PC-3 (cell line): ENCODE measurements at regions of chr12 and their contacts with region 1.

Region 1: GRCh38 chr12:121060149-121061001 is 21.3 kb upstream of the OASL start:
- DNase-seq: peak; percentile 75
- ATAC-seq: peak; percentile 71
- H3K4me3 ChIP-seq: peak overlapping the region; percentile 35; the same call in 1 of the 2 replicates
- H3K27ac ChIP-seq: no peak overlapping the region
- H3K4me1 ChIP-seq: no peaks in the 10 kb centered on the region
- H3K27me3 ChIP-seq: no peaks in the 10 kb centered on the region
- CTCF ChIP-seq: peak; percentile 64

Region 2: GRCh38 chr12:120994589-120995337 is 65.6 kb before region 1 on chr12:
- CTCF ChIA-PET with region 1: no interaction called
- POLR2A ChIA-PET with region 1: no interaction called
- intact Hi-C with region 1: no loop called
- DNase-seq: peak; percentile 14
- ATAC-seq: no peak
- H3K4me3 ChIP-seq: no peak overlapping the region
- H3K27ac ChIP-seq: no peak overlapping the region
- H3K4me1 ChIP-seq: no peaks in the 10 kb centered on the region
- H3K27me3 ChIP-seq: no peaks in the 10 kb centered on the region
- CTCF ChIP-seq: no peak

Region 3: GRCh38 chr12:121095544-121096198 is 35.3 kb after region 1 on chr12:
- CTCF ChIA-PET with region 1: interaction called, 3 read pairs
- POLR2A ChIA-PET with region 1: no interaction called
- intact Hi-C with region 1: loop called (anchors 1 kb)
- DNase-seq: peak; percentile 69
- ATAC-seq: peak; percentile 94
- H3K4me3 ChIP-seq: peak overlapping the region; percentile 66
- H3K27ac ChIP-seq: no peak overlapping the region
- H3K4me1 ChIP-seq: peaks cover 6% of the 10 kb centered on the region; the same call in 1 of the 2 replicates
- H3K27me3 ChIP-seq: no peaks in the 10 kb centered on the region
- CTCF ChIP-seq: peak; percentile 82

Region 4: DNA sequence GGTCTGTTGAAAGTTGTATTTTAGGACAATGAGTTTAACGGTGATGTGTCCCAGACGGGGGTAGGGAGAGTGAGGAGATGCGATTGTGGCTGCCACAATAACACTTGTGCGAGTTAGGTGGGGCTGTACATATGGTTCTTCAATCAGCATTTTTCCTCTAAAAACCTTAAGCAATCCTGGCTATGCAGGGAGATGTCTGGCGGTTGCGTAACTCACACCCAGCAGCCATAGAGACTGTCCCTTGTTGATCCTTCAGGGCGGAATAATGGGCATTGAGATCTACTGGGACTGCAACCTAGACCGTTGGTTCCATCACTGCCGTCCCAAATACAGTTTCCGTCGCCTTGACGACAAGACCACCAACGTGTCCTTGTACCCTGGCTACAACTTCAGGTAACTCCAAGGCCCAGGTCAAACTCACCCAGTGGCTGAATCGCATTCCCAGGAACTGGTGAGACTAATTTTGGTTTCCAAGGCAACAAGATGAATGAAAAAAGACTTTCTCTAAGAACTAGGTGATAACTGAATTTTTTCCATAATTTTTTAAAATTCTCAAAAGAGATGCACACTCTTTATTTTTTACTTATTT is 107.0 kb after region 1 on chr12:
- CTCF ChIA-PET with region 1: no interaction called
- POLR2A ChIA-PET with region 1: no interaction called
- intact Hi-C with region 1: no loop called
- DNase-seq: no peak
- ATAC-seq: no peak
- H3K4me3 ChIP-seq: no peak overlapping the region
- H3K27ac ChIP-seq: no peak overlapping the region
- H3K4me1 ChIP-seq: no peaks in the 10 kb centered on the region; the same call in 1 of the 2 replicates
- H3K27me3 ChIP-seq: no peaks in the 10 kb centered on the region
- CTCF ChIP-seq: no peak

Region 5: GRCh38 chr12:121230538-121230907 is 170.1 kb after region 1 on chr12:
- CTCF ChIA-PET with region 1: no interaction called
- POLR2A ChIA-PET with region 1: no interaction called
- intact Hi-C with region 1: loop called (anchors 2 kb)
- DNase-seq: no peak
- ATAC-seq: no peak; the same call in 1 of the 2 replicates
- H3K4me3 ChIP-seq: no peak overlapping the region
- H3K27ac ChIP-seq: no peak overlapping the region
- H3K4me1 ChIP-seq: peaks cover 22% of the 10 kb centered on the region
- H3K27me3 ChIP-seq: no peaks in the 10 kb centered on the region
- CTCF ChIP-seq: no peak